Transverse colon (tissue), 4 donors: ENCODE measurements at regions of chr17 and their contacts with region 1.

Region 1: DNA sequence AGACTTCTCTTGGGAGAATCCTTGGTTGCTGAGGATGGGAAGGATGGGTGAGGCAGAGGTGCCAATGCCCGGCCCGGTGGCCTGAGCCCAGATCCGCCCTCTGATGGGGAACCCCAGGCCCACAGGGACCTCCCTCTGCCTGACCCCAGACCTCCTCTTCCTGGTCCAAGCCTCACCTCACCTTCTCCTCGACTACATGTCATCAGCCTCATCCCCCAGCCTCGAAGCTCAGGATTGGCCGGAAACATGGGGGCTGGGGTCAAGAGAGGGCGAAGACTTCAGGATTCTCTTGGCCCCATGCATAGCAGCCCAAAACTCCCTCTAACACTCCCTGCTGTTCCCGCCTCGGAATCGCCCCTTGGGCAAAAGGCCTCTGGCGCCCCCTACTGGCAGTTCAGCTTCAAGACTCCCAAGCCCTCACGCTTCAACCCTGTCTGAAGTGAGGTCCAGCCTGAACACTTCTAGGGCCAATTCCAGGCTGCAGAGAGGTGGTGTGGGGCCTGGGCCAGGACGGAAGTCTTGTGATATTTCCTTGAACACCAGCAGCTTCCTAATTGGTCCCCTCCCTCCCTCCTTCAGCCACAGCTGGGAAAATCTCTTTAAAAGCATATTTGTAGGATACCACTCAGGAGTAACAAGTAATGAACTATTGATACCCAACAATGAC is 47.2 kb downstream of the ARHGAP27 start:
- DNase-seq: peak; percentile 92
- H3K4me3 ChIP-seq: no peak overlapping the region
- H3K27ac ChIP-seq: no peak overlapping the region
- H3K4me1 ChIP-seq: peaks cover 0 to 10% (median 0%) of the 10 kb centered on the region in 4 donors
- H3K27me3 ChIP-seq: peaks cover 3% of the 10 kb centered on the region
- CTCF ChIP-seq: peak; percentile 97 to 99 (median 98)
- EP300 ChIP-seq: no peak
- POLR2A ChIP-seq: no peak

Region 2: DNA sequence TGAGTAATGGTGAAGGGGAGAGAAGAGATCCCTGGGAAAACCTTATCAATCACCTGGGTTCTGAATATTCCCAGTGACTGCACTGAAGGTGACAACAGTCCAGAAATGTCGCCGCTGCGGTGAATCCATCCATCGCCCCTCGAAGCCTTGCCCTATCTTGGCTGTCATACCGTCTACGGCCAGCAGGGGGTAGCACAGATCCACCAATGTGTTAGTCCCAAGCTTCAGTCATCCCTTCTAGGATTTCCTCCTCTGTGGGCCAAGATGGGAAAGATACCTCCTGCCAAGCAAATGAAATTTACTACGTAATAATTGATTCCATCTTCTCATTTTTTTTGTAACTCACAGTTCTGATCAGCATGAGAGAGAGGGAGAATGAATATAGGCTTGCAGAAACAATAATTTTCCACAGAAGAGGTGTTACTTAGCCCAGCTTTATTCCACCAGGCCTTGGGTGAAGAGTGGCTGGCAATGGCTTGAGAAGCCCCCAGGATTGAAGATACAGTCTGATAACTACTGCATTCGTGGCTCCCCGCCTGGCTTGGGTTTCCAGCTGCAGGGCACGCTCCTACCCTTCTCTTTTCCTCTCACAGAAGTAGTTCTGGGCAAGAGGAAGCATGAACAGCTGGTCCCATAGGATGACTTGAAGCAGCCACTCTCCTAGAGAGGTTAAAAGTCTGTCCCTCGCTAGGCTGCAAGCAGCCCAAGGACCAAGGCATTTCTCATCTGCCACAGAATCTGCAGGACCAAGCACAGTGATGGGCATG is 166.4 kb before region 1 on chr17:
- in situ Hi-C with region 1: loop called in 3 of 4 experiments (anchors 5 to 10 kb)
- intact Hi-C with region 1: loop called (anchors 2 kb)
- DNase-seq: peak; percentile 90
- H3K4me3 ChIP-seq: no peak overlapping the region
- H3K27ac ChIP-seq: no peak overlapping the region
- H3K4me1 ChIP-seq: peaks cover 0 to 13% (median 6%) of the 10 kb centered on the region in 4 donors
- H3K27me3 ChIP-seq: peaks cover 29% of the 10 kb centered on the region
- CTCF ChIP-seq: peak; percentile 93 to 98 (median 95)
- EP300 ChIP-seq: no peak
- POLR2A ChIP-seq: no peak

Region 3: DNA sequence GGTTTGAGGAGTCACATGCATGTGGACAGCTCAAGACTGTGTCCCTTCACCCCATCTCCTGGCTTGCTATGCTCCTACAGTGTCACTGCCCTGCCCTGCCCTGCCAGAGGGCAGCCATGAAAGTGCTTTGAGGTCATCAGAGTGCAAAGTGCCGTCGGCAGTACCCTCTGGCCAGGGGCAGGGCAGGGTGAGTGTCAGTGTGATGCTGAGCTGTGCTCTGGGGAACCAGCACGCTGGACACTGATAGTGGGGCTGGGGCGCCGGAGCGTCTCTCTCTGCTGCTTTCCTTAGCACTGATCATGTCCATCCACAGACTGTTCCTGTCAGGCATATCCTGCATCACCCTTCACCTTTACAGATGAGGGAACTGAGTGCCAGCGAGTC is 122.0 kb before region 1 on chr17:
- in situ Hi-C with region 1: no loop called
- intact Hi-C with region 1: no loop called
- DNase-seq: no peak
- H3K4me3 ChIP-seq: no peak overlapping the region
- H3K27ac ChIP-seq: peak overlapping the region; percentile 8 to 65 (median 39)
- H3K4me1 ChIP-seq: peaks cover 6 to 33% (median 25%) of the 10 kb centered on the region in 4 donors
- H3K27me3 ChIP-seq: no peaks in the 10 kb centered on the region
- CTCF ChIP-seq: no peak
- EP300 ChIP-seq: no peak
- POLR2A ChIP-seq: no peak

Region 4: GRCh38 chr17:45277216-45277849 is 108.1 kb before region 1 on chr17:
- in situ Hi-C with region 1: loop called in 3 of 4 experiments (anchors 5 to 10 kb)
- intact Hi-C with region 1: loop called (anchors 1 kb)
- DNase-seq: peak; percentile 94
- H3K4me3 ChIP-seq: no peak overlapping the region
- H3K27ac ChIP-seq: peak overlapping the region; percentile 44 to 83 (median 72)
- H3K4me1 ChIP-seq: peaks cover 9 to 30% (median 14%) of the 10 kb centered on the region in 4 donors
- H3K27me3 ChIP-seq: no peaks in the 10 kb centered on the region
- CTCF ChIP-seq: peak; percentile 75 to 94 (median 82)
- EP300 ChIP-seq: no peak
- POLR2A ChIP-seq: no peak

Region 5: GRCh38 chr17:45284176-45285140 is 101.0 kb before region 1 on chr17:
- in situ Hi-C with region 1: loop called in 3 of 4 experiments (anchors 5 to 10 kb)
- intact Hi-C with region 1: no loop called
- DNase-seq: no peak
- H3K4me3 ChIP-seq: no peak overlapping the region
- H3K27ac ChIP-seq: peak overlapping the region; percentile 55 to 81 (median 68)
- H3K4me1 ChIP-seq: peaks cover 12 to 35% (median 28%) of the 10 kb centered on the region in 4 donors
- H3K27me3 ChIP-seq: no peaks in the 10 kb centered on the region
- CTCF ChIP-seq: peak; percentile 10 to 31 (median 15)
- EP300 ChIP-seq: no peak
- POLR2A ChIP-seq: no peak

Region 6: DNA sequence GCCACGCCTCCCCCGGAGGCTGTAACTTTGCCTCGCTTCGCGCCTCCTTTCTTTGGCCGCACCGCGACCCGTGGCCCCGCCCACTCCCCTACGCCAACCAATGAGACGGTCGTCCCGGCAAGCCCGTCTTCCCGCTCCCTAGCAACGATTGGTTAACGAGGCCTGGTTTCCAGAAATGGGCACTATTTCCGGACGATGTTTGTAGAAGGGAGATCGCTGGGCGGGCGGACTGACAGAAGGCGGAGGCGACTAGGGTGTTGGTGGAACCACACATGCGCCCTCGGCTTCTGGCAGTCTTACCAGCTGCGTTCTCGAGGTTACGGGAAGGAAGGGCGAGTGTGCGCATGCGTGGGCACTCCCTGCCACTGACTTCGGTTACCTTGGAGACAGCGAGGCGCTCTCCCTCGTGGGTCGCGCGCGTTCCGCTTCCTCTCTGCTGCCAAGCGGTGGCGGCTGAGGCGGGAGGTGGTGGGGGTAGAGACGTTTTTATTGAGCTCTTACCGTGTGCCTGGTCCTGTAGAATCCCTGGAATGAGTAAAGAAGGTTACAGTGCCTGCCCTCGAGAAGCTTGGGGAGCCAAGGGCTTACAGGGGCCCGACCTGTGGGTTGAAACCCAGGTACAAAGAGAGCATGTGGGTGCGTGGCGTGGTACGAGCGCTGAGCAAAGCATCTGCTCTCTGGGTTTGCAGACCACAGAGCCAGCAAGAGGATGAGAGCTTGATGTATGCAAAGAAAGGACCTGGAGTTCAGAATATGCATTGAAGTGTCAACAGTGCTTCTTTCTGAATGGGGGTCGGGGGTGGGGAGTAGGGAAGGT is 68.1 kb before region 1 on chr17:
- in situ Hi-C with region 1: no loop called
- intact Hi-C with region 1: loop called (anchors 5 kb)
- DNase-seq: peak; percentile 100
- H3K4me3 ChIP-seq: peak overlapping the region; percentile 22 to 90 (median 64)
- H3K27ac ChIP-seq: peak overlapping the region; percentile 99 to 100 (median 100)
- H3K4me1 ChIP-seq: peaks cover 36 to 86% (median 77%) of the 10 kb centered on the region in 4 donors
- H3K27me3 ChIP-seq: no peaks in the 10 kb centered on the region
- CTCF ChIP-seq: peak in 1 of 5 experiments; percentile 18
- EP300 ChIP-seq: no peak
- POLR2A ChIP-seq: peak; percentile 19